ENCODE measurements at regions of chr4 and their contacts with region 1.

Region 1: GRCh38 chr4:83535520-83536361 is at the start of gene GPAT3:
- DNase-seq: peak; percentile 82
- H3K4me3 ChIP-seq: peak within 1 kb of the TSS; percentile 46 to 96 (median 66)
- H3K27ac ChIP-seq: peak within 1 kb of the TSS; percentile 61
- H3K4me1 ChIP-seq: peaks cover 16% of the 10 kb centered on the region
- H3K27me3 ChIP-seq: no peaks in the 10 kb centered on the region
- CTCF ChIP-seq: no peak
- total RNA-seq, gene GPAT3: 8.3 to 20.0 TPM

Region 2: GRCh38 chr4:83362492-83363329 is 173.0 kb before region 1 on chr4:
- CTCF ChIA-PET with region 1: no interaction called
- dilution Hi-C with region 1: no loop called
- in situ Hi-C with region 1: no loop called
- intact Hi-C with region 1: no loop called
- DNase-seq: peak; percentile 32
- H3K4me3 ChIP-seq: no peak overlapping the region
- H3K27ac ChIP-seq: no peak overlapping the region
- H3K4me1 ChIP-seq: peaks cover 19% of the 10 kb centered on the region
- H3K27me3 ChIP-seq: no peaks in the 10 kb centered on the region
- CTCF ChIP-seq: peak; percentile 41 to 42

Region 3: DNA sequence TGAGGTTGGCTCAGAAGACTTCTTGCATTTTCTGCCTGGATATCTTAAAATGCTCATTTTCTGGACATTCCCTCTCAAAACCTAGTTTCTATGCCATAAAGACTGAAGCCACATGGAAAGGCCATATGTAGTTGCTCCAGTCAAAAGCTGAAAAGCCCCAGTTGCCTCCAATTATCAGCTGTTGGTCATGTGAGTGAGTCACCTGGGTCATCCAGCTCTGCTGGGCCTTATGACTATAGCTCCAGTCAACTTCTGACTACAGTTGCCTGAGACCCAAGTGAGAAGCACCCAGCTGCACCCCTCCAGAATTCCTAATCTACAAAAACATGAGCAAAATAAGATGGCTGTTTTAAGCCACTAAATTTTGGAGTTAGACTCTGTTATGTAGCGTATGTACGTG is 122.1 kb before region 1 on chr4:
- CTCF ChIA-PET with region 1: no interaction called
- dilution Hi-C with region 1: no loop called
- in situ Hi-C with region 1: no loop called
- intact Hi-C with region 1: no loop called
- DNase-seq: peak; percentile 6
- H3K4me3 ChIP-seq: no peak overlapping the region
- H3K27ac ChIP-seq: no peak overlapping the region
- H3K4me1 ChIP-seq: no peaks in the 10 kb centered on the region
- H3K27me3 ChIP-seq: no peaks in the 10 kb centered on the region
- CTCF ChIP-seq: no peak

Region 4: DNA sequence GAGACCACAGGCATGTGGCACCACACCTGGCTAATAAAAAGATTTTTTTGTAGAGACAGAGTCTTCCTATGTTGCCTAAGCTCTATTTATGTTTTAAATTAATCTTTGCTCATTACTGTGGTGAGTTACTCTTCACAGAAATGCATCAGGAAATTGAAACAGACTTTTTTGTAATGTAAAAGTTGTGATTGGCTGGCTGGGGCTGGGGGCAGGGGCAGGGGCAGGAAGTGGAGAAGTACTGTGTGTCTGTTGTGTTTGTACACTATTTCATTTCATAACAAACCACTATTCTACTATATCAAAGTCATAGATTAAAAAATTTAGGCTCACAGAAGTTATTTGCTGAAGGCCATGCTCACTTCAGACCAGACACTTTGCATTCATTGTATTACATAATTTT is 31.8 kb before region 1 on chr4:
- CTCF ChIA-PET with region 1: no interaction called
- dilution Hi-C with region 1: no loop called
- in situ Hi-C with region 1: no loop called
- intact Hi-C with region 1: loop called (anchors 2 kb)
- DNase-seq: no peak
- H3K4me3 ChIP-seq: no peak overlapping the region
- H3K27ac ChIP-seq: no peak overlapping the region
- H3K4me1 ChIP-seq: no peaks in the 10 kb centered on the region
- H3K27me3 ChIP-seq: no peaks in the 10 kb centered on the region
- CTCF ChIP-seq: no peak

Region 5: GRCh38 chr4:83516042-83516772 is 19.5 kb before region 1 on chr4:
- CTCF ChIA-PET with region 1: no interaction called
- dilution Hi-C with region 1: no loop called
- in situ Hi-C with region 1: no loop called
- intact Hi-C with region 1: loop called (anchors 1 kb)
- DNase-seq: peak; percentile 93
- H3K4me3 ChIP-seq: no peak overlapping the region
- H3K27ac ChIP-seq: no peak overlapping the region
- H3K4me1 ChIP-seq: peaks cover 4% of the 10 kb centered on the region
- H3K27me3 ChIP-seq: no peaks in the 10 kb centered on the region
- CTCF ChIP-seq: no peak

Region 6: DNA sequence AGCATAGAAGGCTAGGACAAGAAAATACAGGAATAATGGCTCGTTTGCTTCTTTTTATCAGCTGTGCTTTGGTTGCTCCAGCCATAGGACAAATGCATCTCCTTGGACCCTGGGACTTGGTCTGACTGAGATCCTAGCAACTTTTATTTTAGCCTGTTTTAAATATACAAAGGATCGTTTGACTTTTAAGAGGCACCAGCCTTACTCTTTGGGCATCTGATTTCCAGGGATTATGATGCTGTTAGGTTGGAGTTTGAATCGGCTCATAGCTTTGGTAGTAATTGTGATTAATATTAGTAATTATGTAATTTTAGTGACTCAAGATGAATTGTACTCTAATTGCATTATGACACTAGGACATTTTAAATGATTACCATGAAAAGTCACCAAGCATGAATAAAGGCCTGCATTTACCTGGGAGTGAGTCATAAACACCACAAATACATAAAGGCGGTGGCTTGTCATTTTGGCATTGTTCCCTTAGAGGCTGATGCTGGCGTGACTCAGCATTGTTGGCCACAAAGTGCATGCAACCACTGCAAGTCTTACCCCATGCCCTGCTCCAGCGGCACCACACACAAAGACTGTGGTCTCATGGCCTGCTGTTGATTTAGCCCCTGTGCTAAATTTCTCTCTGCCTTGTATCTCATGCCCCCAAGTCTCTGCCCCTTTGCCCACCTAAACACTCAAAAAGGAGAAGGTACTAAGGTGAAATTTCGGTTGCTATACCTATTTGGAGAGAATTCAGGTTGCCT is 12.6 kb after region 1 on chr4:
- CTCF ChIA-PET with region 1: no interaction called
- dilution Hi-C with region 1: no loop called
- in situ Hi-C with region 1: no loop called
- intact Hi-C with region 1: loop called (anchors 2 kb)
- DNase-seq: peak; percentile 99
- H3K4me3 ChIP-seq: no peak overlapping the region
- H3K27ac ChIP-seq: peak overlapping the region; percentile 79
- H3K4me1 ChIP-seq: peaks cover 41% of the 10 kb centered on the region
- H3K27me3 ChIP-seq: no peaks in the 10 kb centered on the region
- CTCF ChIP-seq: no peak

Region 7: DNA sequence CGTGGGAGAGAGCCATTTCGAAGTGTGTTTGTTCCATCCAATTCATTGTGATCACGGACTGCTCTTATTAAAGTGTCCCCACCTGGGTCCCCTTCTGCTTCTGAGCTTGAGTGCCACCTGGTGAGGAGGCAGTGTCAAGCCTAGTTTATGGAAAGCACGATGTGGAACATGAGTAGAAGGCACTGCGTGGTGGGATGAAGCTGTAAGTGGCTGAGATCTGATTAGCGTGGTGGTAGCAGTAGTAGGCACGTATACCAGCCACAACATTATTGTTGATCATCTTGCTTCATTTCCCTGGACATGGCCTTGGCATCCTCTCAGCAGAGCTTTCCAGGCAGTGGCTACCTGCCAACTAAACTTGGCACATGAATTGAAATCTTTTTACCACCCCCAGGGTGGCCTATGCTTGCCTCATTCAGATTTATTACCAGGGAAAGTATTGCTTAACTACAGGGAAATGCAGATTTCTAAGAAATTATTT is 46.6 kb after region 1 on chr4:
- CTCF ChIA-PET with region 1: no interaction called
- dilution Hi-C with region 1: no loop called
- in situ Hi-C with region 1: no loop called
- intact Hi-C with region 1: loop called (anchors 1 kb)
- DNase-seq: peak; percentile 72
- H3K4me3 ChIP-seq: no peak overlapping the region
- H3K27ac ChIP-seq: no peak overlapping the region
- H3K4me1 ChIP-seq: peaks cover 10% of the 10 kb centered on the region
- H3K27me3 ChIP-seq: no peaks in the 10 kb centered on the region
- CTCF ChIP-seq: peak; percentile 1 to 42

Region 8: GRCh38 chr4:83618431-83618830 is 82.7 kb after region 1 on chr4:
- CTCF ChIA-PET with region 1: no interaction called
- dilution Hi-C with region 1: no loop called
- in situ Hi-C with region 1: no loop called
- intact Hi-C with region 1: loop called (anchors 5 kb)
- DNase-seq: peak; percentile 71
- H3K4me3 ChIP-seq: no peak overlapping the region
- H3K27ac ChIP-seq: peak overlapping the region; percentile 13
- H3K4me1 ChIP-seq: peaks cover 23% of the 10 kb centered on the region
- H3K27me3 ChIP-seq: no peaks in the 10 kb centered on the region
- CTCF ChIP-seq: no peak

Measured in mammary epithelial cell (primary cell).